HAP-1 (cell line): ENCODE measurements at regions of chr2 and their contacts with region 1.

Region 1: GRCh38 chr2:26740890-26741302 is 23.2 kb upstream of the SLC35F6 start:
- DNase-seq: no peak
- H3K4me3 ChIP-seq: no peak overlapping the region
- H3K4me1 ChIP-seq: no peaks in the 10 kb centered on the region
- H3K27me3 ChIP-seq: no peaks in the 10 kb centered on the region

Region 2: GRCh38 chr2:26602575-26602974 is 138.3 kb before region 1 on chr2:
- in situ Hi-C with region 1: loop called (anchors 5 kb)
- DNase-seq: no peak
- H3K4me3 ChIP-seq: no peak overlapping the region
- H3K4me1 ChIP-seq: no peaks in the 10 kb centered on the region
- H3K27me3 ChIP-seq: peaks cover 8% of the 10 kb centered on the region